ENCODE measurements at regions of chr7 and their contacts with region 1.

Region 1: DNA sequence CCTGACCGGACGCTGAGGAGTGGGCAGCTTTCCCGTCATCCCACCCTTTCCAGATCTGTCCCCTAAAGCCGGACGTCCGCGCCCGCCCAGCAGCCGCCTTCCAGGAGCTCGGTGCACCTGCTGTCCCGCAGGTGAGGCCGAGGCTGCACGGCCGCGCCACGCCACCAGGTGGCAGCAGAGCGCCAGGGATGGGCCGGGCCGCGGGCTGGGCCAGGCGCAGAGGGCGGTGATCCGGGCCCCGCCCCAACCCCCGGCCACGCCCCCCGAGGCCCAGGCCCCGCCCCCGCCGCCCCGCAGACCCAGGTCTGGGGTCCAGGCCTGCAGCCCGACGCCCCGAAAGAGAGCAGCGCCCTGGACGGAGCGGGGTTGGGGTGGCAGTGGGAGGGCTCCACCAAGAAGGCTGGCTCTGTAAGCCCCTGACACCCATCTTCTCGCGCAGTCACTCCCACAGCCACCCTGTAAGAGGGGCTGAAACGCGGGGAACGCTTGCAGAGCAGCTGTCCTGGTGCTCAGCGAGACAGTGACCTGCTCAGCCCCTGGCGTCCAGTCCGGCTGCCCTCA is 32.2 kb downstream of the FOXL3 start:
- DNase-seq: peak in 1 of 2 donors; percentile 46
- H3K4me3 ChIP-seq: no peak overlapping the region
- H3K27ac ChIP-seq: no peak overlapping the region
- H3K4me1 ChIP-seq: peaks cover 0 to 15% (median 2%) of the 10 kb centered on the region in 4 donors
- H3K27me3 ChIP-seq: peaks cover 0 to 33% of the 10 kb centered on the region in 2 donors
- CTCF ChIP-seq: peak; percentile 92 to 95

Region 2: DNA sequence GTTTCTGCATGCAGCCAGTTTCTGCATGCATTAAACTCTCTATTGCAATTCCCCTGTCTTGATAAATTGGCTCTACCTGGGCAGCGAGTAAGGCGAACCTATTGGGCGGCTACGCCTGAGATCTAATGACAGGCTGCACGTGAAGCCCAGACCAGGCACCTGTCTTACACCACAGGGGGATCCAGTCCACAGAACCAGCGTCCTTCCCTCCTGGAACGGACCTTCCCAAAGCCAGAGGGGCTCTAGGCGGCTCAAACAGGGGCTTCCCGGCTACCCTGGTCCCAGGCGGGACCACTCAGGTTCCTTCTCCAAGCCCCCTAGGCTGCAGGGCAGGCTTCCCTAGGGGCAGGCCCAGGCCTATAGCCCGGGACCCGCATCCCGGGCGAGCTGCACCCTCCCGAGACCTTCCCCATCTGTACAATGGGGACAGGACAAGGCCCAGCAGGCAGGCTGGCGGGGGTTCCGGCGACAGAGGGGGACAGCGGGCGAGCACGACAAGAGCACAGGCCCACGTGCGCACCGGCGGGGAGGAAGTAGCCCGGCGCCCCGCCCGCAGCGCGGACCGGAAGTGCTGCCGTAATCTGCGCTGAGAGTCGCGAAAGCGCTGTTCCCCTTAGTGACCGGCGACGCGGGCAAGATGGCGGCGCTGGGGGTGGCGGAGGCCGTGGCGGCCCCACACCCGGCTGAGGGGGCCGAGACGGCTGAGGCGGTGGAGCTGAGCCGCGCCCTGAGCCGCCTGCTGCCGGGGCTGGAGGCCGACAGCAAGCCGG is 404.1 kb after region 1 on chr7 and contains the start of gene DNAAF5:
- intact Hi-C with region 1: no loop called
- DNase-seq: peak; percentile 74 to 87
- H3K4me3 ChIP-seq: peak within 1 kb of the TSS; percentile 72 to 98
- H3K27ac ChIP-seq: peak within 1 kb of the TSS; percentile 68 to 69
- H3K4me1 ChIP-seq: peaks cover 0 to 25% (median 18%) of the 10 kb centered on the region in 4 donors
- H3K27me3 ChIP-seq: no peaks in the 10 kb centered on the region
- CTCF ChIP-seq: peak in 1 of 2 experiments; percentile 15

Region 3: GRCh38 chr7:774161-775109 is 452.2 kb after region 1 on chr7:
- intact Hi-C with region 1: loop called (anchors 2 kb)
- DNase-seq: no peak
- H3K4me3 ChIP-seq: no peak overlapping the region
- H3K27ac ChIP-seq: no peak overlapping the region
- H3K4me1 ChIP-seq: peaks cover 0 to 32% (median 25%) of the 10 kb centered on the region in 4 donors
- H3K27me3 ChIP-seq: no peaks in the 10 kb centered on the region
- CTCF ChIP-seq: peak; percentile 87 to 91